ENCODE measurements at regions of chr3 and their contacts with region 1.

Region 1: GRCh38 chr3:159260049-159260662 is 458.3 kb downstream of the MFSD1 start:
- DNase-seq: no peak
- ATAC-seq: peak; percentile 59

Region 2: GRCh38 chr3:158845765-158846350 is 414.3 kb before region 1 on chr3:
- intact Hi-C with region 1: loop called (anchors 1 kb)
- DNase-seq: no peak
- ATAC-seq: no peak

Region 3: GRCh38 chr3:158918008-158918407 is 342.1 kb before region 1 on chr3:
- intact Hi-C with region 1: loop called (anchors 2 kb)
- DNase-seq: no peak
- ATAC-seq: no peak

Region 4: GRCh38 chr3:159114582-159114981 is 145.6 kb before region 1 on chr3:
- intact Hi-C with region 1: no loop called
- DNase-seq: no peak
- ATAC-seq: no peak

Region 5: DNA sequence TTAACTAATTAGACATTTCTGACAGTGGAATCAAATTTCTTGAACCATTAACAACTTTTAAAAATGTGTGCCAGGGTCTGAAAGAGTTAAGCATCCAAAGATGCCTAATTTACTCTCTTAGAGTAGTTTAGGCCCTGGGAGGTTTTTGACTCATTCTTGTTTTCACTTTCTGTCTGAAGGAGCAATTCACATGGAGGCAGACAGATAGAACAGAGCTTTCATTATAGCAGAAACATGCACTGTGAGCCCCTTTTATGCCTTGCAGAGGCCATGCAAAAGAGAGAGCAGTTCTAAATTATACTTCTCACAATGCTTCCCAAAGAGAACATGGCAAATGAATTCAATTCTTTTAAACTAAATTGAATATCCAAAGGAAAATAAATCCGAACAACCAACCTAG is 96.5 kb after region 1 on chr3:
- intact Hi-C with region 1: no loop called
- DNase-seq: no peak
- ATAC-seq: no peak

Region 6: GRCh38 chr3:159586571-159587202 is 326.5 kb after region 1 on chr3:
- intact Hi-C with region 1: loop called (anchors 10 kb)
- DNase-seq: no peak
- ATAC-seq: no peak

Region 7: GRCh38 chr3:159804726-159805410 is 544.7 kb after region 1 on chr3:
- intact Hi-C with region 1: loop called (anchors 5 kb)
- DNase-seq: no peak
- ATAC-seq: peak; percentile 93

Measured in Right ventricle myocardium inferior (tissue), 1 donor.